T-cell (primary cell): ENCODE measurements at regions of chr13 and their contacts with region 1.

Region 1: GRCh38 chr13:99436686-99437416 is 64.4 kb upstream of the TM9SF2 start:
- DNase-seq: peak; percentile 88 to 97 (median 94)
- ATAC-seq: peak; percentile 49 to 72 (median 68)
- H3K4me3 ChIP-seq: peak overlapping the region in 1 of 2 donors; percentile 34
- H3K4me3 Mint-ChIP-seq: peak overlapping the region; percentile 1 to 54 (median 50)
- H3K27ac ChIP-seq: peak overlapping the region; percentile 0
- H3K27ac Mint-ChIP-seq: peak overlapping the region; percentile 83 to 95
- H3K4me1 ChIP-seq: peaks cover 46 to 52% of the 10 kb centered on the region in 2 experiments
- H3K4me1 Mint-ChIP-seq: peaks cover 57 to 58% (median 58%) of the 10 kb centered on the region in 3 donors
- H3K27me3 ChIP-seq: peaks cover 0 to 5% of the 10 kb centered on the region in 2 experiments
- H3K27me3 Mint-ChIP-seq: no peaks in the 10 kb centered on the region

Region 2: GRCh38 chr13:99275093-99275469 is 161.8 kb before region 1 on chr13:
- CTCF ChIA-PET with region 1: interaction called, 53 to 195 read pairs
- POLR2A ChIA-PET with region 1: interaction called in 1 of 2 experiments, 3 read pairs
- DNase-seq: peak in 24 of 35 experiments; percentile 11 to 69 (median 32)
- ATAC-seq: peak; percentile 75 to 84 (median 82)
- H3K4me3 ChIP-seq: no peak overlapping the region
- H3K4me3 Mint-ChIP-seq: peak overlapping the region in 2 of 3 donors; percentile 22 to 61
- H3K27ac ChIP-seq: peak overlapping the region; percentile 87
- H3K27ac Mint-ChIP-seq: peak overlapping the region; percentile 89 to 92
- H3K4me1 ChIP-seq: peaks cover 38 to 68% of the 10 kb centered on the region in 2 experiments
- H3K4me1 Mint-ChIP-seq: peaks cover 94 to 96% (median 94%) of the 10 kb centered on the region in 3 donors
- H3K27me3 ChIP-seq: no peaks in the 10 kb centered on the region
- H3K27me3 Mint-ChIP-seq: no peaks in the 10 kb centered on the region

Region 3: DNA sequence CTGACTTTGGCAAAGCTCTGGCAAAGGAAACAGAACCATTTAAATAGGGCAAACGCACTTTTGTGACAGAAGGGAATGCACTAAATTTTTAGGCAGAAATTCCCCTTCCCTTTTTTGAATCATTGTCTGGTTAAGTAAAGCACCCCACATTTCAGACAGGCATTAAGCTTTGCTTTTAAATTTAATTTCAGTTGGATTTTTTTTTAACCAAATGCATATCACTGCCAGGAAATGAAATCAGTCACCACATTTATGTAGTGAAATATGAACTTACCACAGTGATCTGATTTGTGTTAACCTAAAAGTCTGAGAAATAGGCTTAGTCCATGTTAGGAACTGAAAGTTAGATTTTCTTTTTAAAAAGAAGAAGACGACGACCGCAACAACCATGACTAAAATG is 140.5 kb before region 1 on chr13:
- CTCF ChIA-PET with region 1: interaction called in 1 of 2 experiments, 21 read pairs
- POLR2A ChIA-PET with region 1: interaction called in 1 of 2 experiments, 3 read pairs
- DNase-seq: peak in 1 of 35 experiments; percentile 62
- ATAC-seq: peak; percentile 56 to 72 (median 68)
- H3K4me3 ChIP-seq: no peak overlapping the region
- H3K4me3 Mint-ChIP-seq: peak overlapping the region; percentile 67 to 85 (median 82)
- H3K27ac ChIP-seq: peak overlapping the region; percentile 80
- H3K27ac Mint-ChIP-seq: peak overlapping the region; percentile 97 to 99
- H3K4me1 ChIP-seq: peaks cover 32 to 53% of the 10 kb centered on the region in 2 experiments
- H3K4me1 Mint-ChIP-seq: peaks cover 83 to 89% (median 85%) of the 10 kb centered on the region in 3 donors
- H3K27me3 ChIP-seq: no peaks in the 10 kb centered on the region
- H3K27me3 Mint-ChIP-seq: no peaks in the 10 kb centered on the region

Region 4: GRCh38 chr13:99356158-99357091 is 80.4 kb before region 1 on chr13:
- CTCF ChIA-PET with region 1: interaction called, 6 to 28 read pairs
- POLR2A ChIA-PET with region 1: interaction called in 1 of 2 experiments, 3 read pairs
- DNase-seq: peak in 32 of 35 experiments; percentile 32 to 93 (median 60)
- ATAC-seq: peak; percentile 51 to 73 (median 55)
- H3K4me3 ChIP-seq: peak overlapping the region in 1 of 2 donors; percentile 28
- H3K4me3 Mint-ChIP-seq: peak overlapping the region; percentile 64 to 73 (median 65)
- H3K27ac ChIP-seq: peak overlapping the region; percentile 100
- H3K27ac Mint-ChIP-seq: peak overlapping the region; percentile 99
- H3K4me1 ChIP-seq: peaks cover 92 to 95% of the 10 kb centered on the region in 2 experiments
- H3K4me1 Mint-ChIP-seq: peaks cover 98 to 100% (median 99%) of the 10 kb centered on the region in 3 donors
- H3K27me3 ChIP-seq: no peaks in the 10 kb centered on the region
- H3K27me3 Mint-ChIP-seq: no peaks in the 10 kb centered on the region

Region 5: DNA sequence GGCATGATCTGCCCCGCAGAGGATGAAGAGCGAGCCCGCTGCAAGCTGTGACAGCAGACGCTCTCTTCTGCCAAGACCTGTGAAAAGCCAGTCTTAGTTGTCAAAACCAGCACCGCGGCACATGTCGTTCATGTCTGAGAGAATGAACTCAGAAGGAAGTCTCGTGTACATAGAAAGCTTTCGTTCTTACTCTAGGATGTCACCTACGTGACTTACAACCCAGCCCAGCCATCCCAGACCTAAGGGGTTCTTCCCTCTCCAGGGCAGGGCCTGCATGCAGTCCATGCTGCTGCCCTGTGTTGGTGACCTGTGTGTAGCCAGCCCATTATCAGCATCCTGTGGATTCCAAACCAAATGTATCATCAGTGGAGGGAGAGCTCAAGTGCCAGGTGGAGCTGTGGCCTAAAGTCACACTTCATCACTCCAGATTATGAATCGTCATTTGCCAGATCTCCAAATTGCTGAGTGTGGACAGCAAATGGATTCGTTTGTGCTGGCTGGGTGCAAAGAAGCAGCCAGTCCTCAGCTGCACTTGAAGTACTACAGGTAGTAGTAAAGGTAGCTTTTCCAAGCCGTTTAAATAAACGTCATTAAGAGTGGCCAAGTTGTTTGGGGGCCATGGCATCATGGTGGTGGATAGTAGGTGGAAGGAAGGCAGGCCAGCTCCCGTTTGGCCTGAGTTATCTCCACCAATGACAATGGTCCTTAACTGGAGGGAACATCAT is 55.8 kb before region 1 on chr13:
- CTCF ChIA-PET with region 1: interaction called, 19 to 55 read pairs
- POLR2A ChIA-PET with region 1: interaction called in 1 of 2 experiments, 3 read pairs
- DNase-seq: peak; percentile 42 to 76 (median 63)
- ATAC-seq: peak; percentile 44 to 72 (median 66)
- H3K4me3 ChIP-seq: no peak overlapping the region
- H3K4me3 Mint-ChIP-seq: peak overlapping the region in 2 of 3 donors; percentile 47 to 75
- H3K27ac ChIP-seq: peak overlapping the region; percentile 81
- H3K27ac Mint-ChIP-seq: peak overlapping the region; percentile 98
- H3K4me1 ChIP-seq: peaks cover 66 to 85% of the 10 kb centered on the region in 2 experiments
- H3K4me1 Mint-ChIP-seq: peaks cover 89 to 96% (median 96%) of the 10 kb centered on the region in 3 donors
- H3K27me3 ChIP-seq: no peaks in the 10 kb centered on the region
- H3K27me3 Mint-ChIP-seq: no peaks in the 10 kb centered on the region

Region 6: DNA sequence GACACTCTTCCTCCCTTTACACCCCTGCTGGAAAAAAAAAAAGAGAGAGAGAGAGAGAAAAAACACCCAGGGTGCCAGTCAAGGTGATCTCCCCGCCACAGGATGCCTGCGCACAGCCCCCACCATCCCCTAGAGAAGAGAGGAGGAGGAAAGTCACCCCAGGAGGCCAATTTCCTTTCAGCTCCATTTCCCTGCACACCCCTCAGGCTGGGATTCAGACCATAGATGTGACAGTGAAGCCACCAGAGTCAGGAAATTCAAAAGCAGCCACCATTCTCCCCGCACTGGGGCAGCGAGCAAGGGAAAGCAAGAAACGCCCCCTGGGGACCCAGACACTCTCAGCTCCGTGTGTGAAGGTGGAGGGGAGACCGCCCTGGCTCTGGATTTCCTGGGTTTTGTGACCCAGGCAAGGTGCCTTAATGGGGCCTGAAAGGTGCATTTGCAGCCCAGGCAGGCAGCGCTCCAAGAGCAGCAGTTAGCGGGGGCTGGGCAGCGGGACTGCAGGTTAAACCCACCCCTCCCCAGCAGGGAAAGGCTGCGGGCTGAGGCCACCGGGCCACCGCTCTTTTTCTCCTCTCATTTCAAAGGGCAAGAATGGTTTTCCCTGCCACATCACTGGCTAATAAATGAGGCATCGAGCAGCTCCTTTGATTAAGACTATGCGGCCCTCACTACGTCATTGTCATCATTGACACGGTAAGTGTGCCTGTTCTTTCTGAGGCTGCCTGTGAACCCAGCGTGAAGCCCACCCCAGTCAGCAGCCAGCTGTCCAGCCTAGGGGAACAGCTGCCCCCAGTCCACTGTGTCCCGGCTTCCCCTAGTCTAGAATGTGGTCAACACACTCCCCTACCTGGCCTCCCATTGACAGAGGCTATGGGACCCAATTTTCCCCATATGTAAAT is 19.4 kb before region 1 on chr13:
- CTCF ChIA-PET with region 1: interaction called, 13 to 18 read pairs
- POLR2A ChIA-PET with region 1: interaction called, 4 to 6 read pairs
- DNase-seq: peak in 24 of 35 experiments; percentile 13 to 69 (median 50)
- ATAC-seq: peak; percentile 10 to 45 (median 11)
- H3K4me3 ChIP-seq: peak overlapping the region; percentile 47 to 84
- H3K4me3 Mint-ChIP-seq: no peak overlapping the region
- H3K27ac ChIP-seq: peak overlapping the region; percentile 71
- H3K27ac Mint-ChIP-seq: no peak overlapping the region
- H3K4me1 ChIP-seq: peaks cover 74 to 89% of the 10 kb centered on the region in 2 experiments
- H3K4me1 Mint-ChIP-seq: peaks cover 54 to 65% (median 57%) of the 10 kb centered on the region in 3 donors
- H3K27me3 ChIP-seq: peaks cover 0 to 14% of the 10 kb centered on the region in 2 experiments
- H3K27me3 Mint-ChIP-seq: no peaks in the 10 kb centered on the region

Region 7: DNA sequence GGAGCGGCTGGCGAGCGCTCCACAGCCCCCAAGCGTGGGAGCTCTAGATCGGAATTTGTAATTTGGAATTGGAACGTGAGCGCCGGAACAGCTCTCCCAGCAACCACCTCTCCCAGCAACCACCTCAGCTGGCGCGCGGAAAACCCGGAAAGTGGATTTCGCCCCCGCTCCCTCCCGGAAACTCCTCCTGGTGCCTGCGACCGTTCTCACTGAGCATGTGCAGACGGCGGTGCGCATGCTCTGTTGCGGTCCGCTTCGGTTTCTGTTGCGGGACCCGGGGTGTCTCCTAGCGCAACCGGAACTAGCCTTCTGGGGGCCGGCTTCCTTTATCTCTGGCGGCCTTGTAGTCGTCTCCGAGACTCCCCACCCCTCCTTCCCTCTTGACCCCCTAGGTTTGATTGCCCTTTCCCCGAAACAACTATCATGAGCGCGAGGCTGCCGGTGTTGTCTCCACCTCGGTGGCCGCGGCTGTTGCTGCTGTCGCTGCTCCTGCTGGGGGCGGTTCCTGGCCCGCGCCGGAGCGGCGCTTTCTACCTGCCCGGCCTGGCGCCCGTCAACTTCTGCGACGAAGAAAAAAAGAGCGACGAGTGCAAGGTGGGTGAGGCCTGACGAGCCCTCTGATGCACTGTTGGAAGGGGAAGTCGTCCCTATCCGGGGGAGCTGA is 64.5 kb after region 1 on chr13 and contains the start of gene TM9SF2:
- CTCF ChIA-PET with region 1: interaction called, 8 to 17 read pairs
- POLR2A ChIA-PET with region 1: interaction called in 1 of 2 experiments, 11 read pairs
- DNase-seq: peak; percentile 87 to 99 (median 93)
- ATAC-seq: peak; percentile 59 to 67 (median 62)
- H3K4me3 ChIP-seq: peak within 1 kb of the TSS; percentile 94 to 96
- H3K4me3 Mint-ChIP-seq: peak within 1 kb of the TSS; percentile 96 to 98 (median 96)
- H3K27ac ChIP-seq: peak within 1 kb of the TSS; percentile 86
- H3K27ac Mint-ChIP-seq: peak within 1 kb of the TSS; percentile 95 to 96
- H3K4me1 ChIP-seq: peaks cover 60 to 62% of the 10 kb centered on the region in 2 experiments
- H3K4me1 Mint-ChIP-seq: peaks cover 78 to 89% (median 85%) of the 10 kb centered on the region in 3 donors
- H3K27me3 ChIP-seq: no peaks in the 10 kb centered on the region
- H3K27me3 Mint-ChIP-seq: no peaks in the 10 kb centered on the region
- total RNA-seq, gene TM9SF2: 43.2 to 54.0 (median 48.8) TPM

Region 8: DNA sequence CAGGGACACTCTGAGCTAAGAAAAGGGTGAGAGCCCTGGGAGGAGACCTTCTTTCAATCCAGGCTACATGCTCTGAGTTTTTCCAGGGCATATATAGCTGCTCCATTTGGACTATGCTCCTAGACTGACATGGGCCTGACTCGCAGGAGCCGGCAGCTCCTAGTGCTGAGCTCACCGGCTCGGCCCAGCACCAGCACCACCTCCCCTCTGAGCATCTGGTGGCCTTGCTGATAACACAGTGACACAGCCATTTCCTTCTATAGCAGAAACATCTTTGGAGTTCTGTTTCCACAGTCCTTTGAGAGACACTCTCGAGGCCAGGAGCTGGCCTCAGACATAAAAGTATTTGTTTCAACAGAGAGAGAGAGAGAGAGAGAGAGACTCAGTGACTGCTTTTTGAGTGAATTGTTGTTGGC is 249.3 kb after region 1 on chr13:
- CTCF ChIA-PET with region 1: no interaction called
- POLR2A ChIA-PET with region 1: no interaction called
- DNase-seq: no peak
- ATAC-seq: no peak
- H3K4me3 ChIP-seq: no peak overlapping the region
- H3K4me3 Mint-ChIP-seq: no peak overlapping the region
- H3K27ac ChIP-seq: no peak overlapping the region
- H3K27ac Mint-ChIP-seq: no peak overlapping the region
- H3K4me1 ChIP-seq: no peaks in the 10 kb centered on the region
- H3K4me1 Mint-ChIP-seq: peaks cover 0 to 3% (median 2%) of the 10 kb centered on the region in 3 donors
- H3K27me3 ChIP-seq: no peaks in the 10 kb centered on the region
- H3K27me3 Mint-ChIP-seq: no peaks in the 10 kb centered on the region